ENCODE measurements at regions of chr14 and their contacts with region 1.

Region 1: GRCh38 chr14:22872033-22872832 is 693 bp downstream of the LRP10 start:
- DNase-seq: peak; percentile 78
- ATAC-seq: peak; percentile 52
- H3K4me3 Mint-ChIP-seq: peak overlapping the region; percentile 84
- H3K27ac Mint-ChIP-seq: peak overlapping the region; percentile 97
- H3K4me1 Mint-ChIP-seq: peaks cover 24% of the 10 kb centered on the region
- H3K27me3 Mint-ChIP-seq: no peaks in the 10 kb centered on the region

Region 2: GRCh38 chr14:22766456-22767322 is 105.5 kb before region 1 on chr14 and contains the start of gene OXA1L:
- CTCF ChIA-PET with region 1: interaction called, 7 read pairs
- POLR2A ChIA-PET with region 1: interaction called, 11 read pairs
- DNase-seq: peak; percentile 98
- ATAC-seq: peak; percentile 94
- H3K4me3 Mint-ChIP-seq: peak within 1 kb of the TSS; percentile 93
- H3K27ac Mint-ChIP-seq: peak within 1 kb of the TSS; percentile 97
- H3K4me1 Mint-ChIP-seq: peaks cover 33% of the 10 kb centered on the region
- H3K27me3 Mint-ChIP-seq: no peaks in the 10 kb centered on the region
- total RNA-seq, gene OXA1L: 104 to 107 TPM

Region 3: GRCh38 chr14:22829661-22830442 is 42.4 kb before region 1 on chr14 and contains the start of gene MRPL52:
- CTCF ChIA-PET with region 1: interaction called, 590 read pairs
- POLR2A ChIA-PET with region 1: interaction called, 3 read pairs
- DNase-seq: peak; percentile 95
- ATAC-seq: peak; percentile 93
- H3K4me3 Mint-ChIP-seq: peak within 1 kb of the TSS; percentile 95
- H3K27ac Mint-ChIP-seq: peak within 1 kb of the TSS; percentile 96
- H3K4me1 Mint-ChIP-seq: peaks cover 32% of the 10 kb centered on the region
- H3K27me3 Mint-ChIP-seq: no peaks in the 10 kb centered on the region
- total RNA-seq, gene MRPL52: 93.9 to 97.3 TPM

Region 4: DNA sequence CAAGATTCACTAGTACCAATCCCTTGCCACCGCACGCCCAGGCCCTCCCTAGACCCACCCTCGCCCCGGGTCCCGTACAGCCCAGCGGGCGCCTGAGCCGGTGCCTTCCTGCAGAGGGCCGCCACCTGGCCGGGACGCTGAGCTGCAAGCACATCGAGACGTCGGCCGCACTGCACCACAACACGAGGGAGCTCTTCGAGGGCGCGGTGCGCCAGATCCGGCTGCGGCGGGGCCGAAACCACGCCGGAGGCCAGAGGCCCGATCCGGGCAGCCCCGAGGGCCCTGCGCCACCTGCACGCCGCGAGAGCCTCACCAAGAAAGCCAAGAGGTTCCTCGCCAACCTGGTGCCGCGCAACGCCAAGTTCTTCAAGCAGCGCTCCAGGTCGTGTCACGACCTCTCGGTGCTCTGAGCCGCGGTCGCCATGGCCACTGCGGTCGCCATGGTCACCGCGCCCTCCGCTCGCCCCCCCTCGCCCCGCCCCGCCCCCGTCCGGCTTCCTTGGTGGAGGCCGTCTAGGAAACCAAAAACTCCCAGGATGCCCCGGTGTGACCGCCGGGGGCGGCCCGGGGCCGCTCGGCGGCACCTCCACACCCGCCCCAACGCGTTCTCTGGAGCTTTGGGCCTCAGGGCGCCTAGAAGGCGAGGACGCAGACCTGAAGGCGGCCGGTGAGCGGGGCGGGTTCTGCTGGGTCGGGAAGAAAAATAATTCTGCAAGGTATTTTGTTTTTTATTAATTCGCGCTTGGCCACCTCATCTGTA is 14.4 kb after region 1 on chr14:
- CTCF ChIA-PET with region 1: interaction called, 152 read pairs
- POLR2A ChIA-PET with region 1: interaction called, 10 read pairs
- DNase-seq: peak; percentile 78
- ATAC-seq: peak; percentile 88
- H3K4me3 Mint-ChIP-seq: peak overlapping the region; percentile 75
- H3K27ac Mint-ChIP-seq: peak overlapping the region; percentile 75
- H3K4me1 Mint-ChIP-seq: peaks cover 31% of the 10 kb centered on the region
- H3K27me3 Mint-ChIP-seq: peaks cover 36% of the 10 kb centered on the region

Region 5: DNA sequence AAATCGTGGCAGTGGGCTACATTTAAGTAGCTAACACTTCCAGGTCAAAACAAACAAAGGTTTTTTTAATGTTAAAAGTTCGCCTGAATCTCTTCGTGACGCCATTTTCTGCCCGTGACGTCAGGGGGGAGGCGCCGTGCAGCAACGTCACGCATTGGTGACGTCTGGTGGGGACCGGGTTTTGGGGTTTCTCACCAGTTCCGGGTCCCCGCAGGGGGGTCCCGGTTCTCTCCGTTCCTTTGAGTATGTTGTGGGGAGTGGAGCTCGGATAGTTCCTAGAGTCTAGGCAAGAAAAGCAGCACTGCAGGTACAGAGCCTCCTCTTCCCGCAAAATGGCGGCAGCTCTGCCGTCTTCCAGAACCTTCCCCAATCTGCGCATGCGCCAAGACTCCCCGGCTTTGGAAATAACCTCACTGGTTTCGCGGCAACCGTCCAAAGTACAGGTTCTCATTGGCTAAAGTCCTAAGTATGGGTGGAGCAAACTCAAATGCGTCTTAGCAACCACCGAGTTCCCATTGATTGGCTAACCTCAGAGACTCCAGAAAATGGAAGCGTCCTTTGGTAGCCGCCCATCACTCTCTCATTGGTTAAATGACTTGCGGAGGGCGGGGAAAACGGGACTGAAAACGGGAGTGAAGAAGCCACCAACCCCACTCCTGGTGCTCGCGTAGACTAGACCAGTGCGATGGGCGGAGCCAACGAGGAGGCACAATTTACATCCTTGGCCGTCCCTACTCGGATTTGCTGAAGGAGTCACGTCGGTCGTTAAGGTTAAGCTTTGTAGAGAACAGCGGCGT is 46.8 kb after region 1 on chr14 and contains the start of gene RBM23:
- CTCF ChIA-PET with region 1: interaction called, 18 read pairs
- POLR2A ChIA-PET with region 1: interaction called, 17 read pairs
- DNase-seq: peak; percentile 100
- ATAC-seq: peak; percentile 96
- H3K4me3 Mint-ChIP-seq: peak within 1 kb of the TSS; percentile 88
- H3K27ac Mint-ChIP-seq: peak within 1 kb of the TSS; percentile 98
- H3K4me1 Mint-ChIP-seq: peaks cover 35% of the 10 kb centered on the region
- H3K27me3 Mint-ChIP-seq: no peaks in the 10 kb centered on the region
- total RNA-seq, gene RBM23: 77.1 to 81.2 TPM

Region 6: GRCh38 chr14:22994762-22995275 is 122.6 kb after region 1 on chr14:
- CTCF ChIA-PET with region 1: no interaction called
- POLR2A ChIA-PET with region 1: no interaction called
- DNase-seq: peak; percentile 56
- ATAC-seq: peak; percentile 83
- H3K4me3 Mint-ChIP-seq: no peak overlapping the region
- H3K27ac Mint-ChIP-seq: no peak overlapping the region
- H3K4me1 Mint-ChIP-seq: peaks cover 3% of the 10 kb centered on the region
- H3K27me3 Mint-ChIP-seq: no peaks in the 10 kb centered on the region